ENCODE measurements at regions of chr7 and their contacts with region 1.

Region 1: GRCh38 chr7:128135515-128136214 is 104.4 kb upstream of the LRRC4 start:
- DNase-seq: peak; percentile 49 to 77 (median 70)
- H3K4me3 ChIP-seq: peak overlapping the region; percentile 32 to 79 (median 62)
- H3K27ac ChIP-seq: no peak overlapping the region
- H3K4me1 ChIP-seq: peaks cover 0 to 20% (median 17%) of the 10 kb centered on the region in 4 experiments
- H3K27me3 ChIP-seq: peaks cover 19 to 65% (median 32%) of the 10 kb centered on the region in 5 experiments

Region 2: GRCh38 chr7:127708788-127709187 is 426.9 kb before region 1 on chr7:
- CTCF ChIA-PET with region 1: interaction called, 12 read pairs
- POLR2A ChIA-PET with region 1: no interaction called
- DNase-seq: peak; percentile 81 to 92 (median 86)
- H3K4me3 ChIP-seq: no peak overlapping the region
- H3K27ac ChIP-seq: no peak overlapping the region
- H3K4me1 ChIP-seq: no peaks in the 10 kb centered on the region
- H3K27me3 ChIP-seq: no peaks in the 10 kb centered on the region

Region 3: GRCh38 chr7:128066861-128067260 is 68.8 kb before region 1 on chr7:
- CTCF ChIA-PET with region 1: no interaction called
- POLR2A ChIA-PET with region 1: no interaction called
- DNase-seq: no peak
- H3K4me3 ChIP-seq: no peak overlapping the region
- H3K27ac ChIP-seq: no peak overlapping the region
- H3K4me1 ChIP-seq: peaks cover 0 to 12% (median 0%) of the 10 kb centered on the region in 4 experiments
- H3K27me3 ChIP-seq: no peaks in the 10 kb centered on the region

Region 4: DNA sequence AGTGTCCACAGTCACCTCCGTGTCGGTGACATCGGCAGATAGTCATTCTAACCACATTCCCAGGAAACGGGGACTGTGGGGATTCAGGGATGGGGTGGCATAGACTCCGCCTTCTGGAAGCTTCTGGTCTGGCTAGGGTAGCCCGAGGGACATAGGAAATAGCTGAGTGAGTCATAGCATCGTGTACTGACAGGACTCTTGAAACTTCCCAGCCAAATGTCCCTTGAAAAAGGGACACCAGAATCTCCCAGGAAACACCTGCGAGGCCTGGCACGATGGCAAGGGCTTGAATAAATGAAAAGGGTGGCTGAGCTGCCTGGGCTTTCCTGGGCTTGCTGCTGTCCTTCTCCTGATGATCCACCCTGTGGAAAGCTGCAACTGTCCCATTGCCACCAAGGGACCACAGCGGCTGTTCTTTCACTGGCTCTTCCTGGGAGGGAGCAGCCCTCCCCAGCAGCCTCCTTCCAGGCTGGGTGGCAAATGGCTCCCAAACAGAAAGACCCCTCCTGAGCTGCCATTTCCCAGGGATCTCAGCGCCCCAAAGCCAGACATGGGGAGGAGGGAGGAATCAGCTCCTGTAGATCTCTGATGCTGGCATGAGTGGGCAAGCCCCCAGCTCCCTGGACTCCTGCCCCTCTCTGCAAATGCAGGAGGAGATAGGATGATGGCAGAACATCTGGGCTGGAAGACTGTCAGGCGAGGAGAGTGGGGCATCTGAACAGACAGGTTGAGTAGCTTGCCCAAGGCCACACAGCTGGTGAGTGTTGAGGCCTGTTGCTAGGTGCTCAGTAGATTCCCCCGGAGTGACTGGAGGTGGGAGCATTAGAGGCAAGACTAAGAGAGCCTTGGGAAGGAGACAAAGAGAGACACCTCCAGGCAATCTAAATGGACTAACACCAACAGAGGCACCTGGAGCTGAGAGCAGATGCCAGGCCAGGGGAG is 20.0 kb before region 1 on chr7:
- CTCF ChIA-PET with region 1: interaction called, 13 read pairs
- POLR2A ChIA-PET with region 1: no interaction called
- DNase-seq: no peak
- H3K4me3 ChIP-seq: no peak overlapping the region
- H3K27ac ChIP-seq: no peak overlapping the region
- H3K4me1 ChIP-seq: peaks cover 0 to 22% (median 8%) of the 10 kb centered on the region in 4 experiments
- H3K27me3 ChIP-seq: peaks cover 0 to 12% (median 4%) of the 10 kb centered on the region in 5 experiments

Region 5: GRCh38 chr7:128122576-128123290 is 12.9 kb before region 1 on chr7:
- CTCF ChIA-PET with region 1: interaction called, 14 read pairs
- POLR2A ChIA-PET with region 1: interaction called, 6 read pairs
- DNase-seq: no peak
- H3K4me3 ChIP-seq: peak overlapping the region in 1 of 7 experiments; percentile 2
- H3K27ac ChIP-seq: no peak overlapping the region
- H3K4me1 ChIP-seq: peaks cover 0 to 6% (median 4%) of the 10 kb centered on the region in 4 experiments
- H3K27me3 ChIP-seq: peaks cover 0 to 9% (median 6%) of the 10 kb centered on the region in 5 experiments

Region 6: DNA sequence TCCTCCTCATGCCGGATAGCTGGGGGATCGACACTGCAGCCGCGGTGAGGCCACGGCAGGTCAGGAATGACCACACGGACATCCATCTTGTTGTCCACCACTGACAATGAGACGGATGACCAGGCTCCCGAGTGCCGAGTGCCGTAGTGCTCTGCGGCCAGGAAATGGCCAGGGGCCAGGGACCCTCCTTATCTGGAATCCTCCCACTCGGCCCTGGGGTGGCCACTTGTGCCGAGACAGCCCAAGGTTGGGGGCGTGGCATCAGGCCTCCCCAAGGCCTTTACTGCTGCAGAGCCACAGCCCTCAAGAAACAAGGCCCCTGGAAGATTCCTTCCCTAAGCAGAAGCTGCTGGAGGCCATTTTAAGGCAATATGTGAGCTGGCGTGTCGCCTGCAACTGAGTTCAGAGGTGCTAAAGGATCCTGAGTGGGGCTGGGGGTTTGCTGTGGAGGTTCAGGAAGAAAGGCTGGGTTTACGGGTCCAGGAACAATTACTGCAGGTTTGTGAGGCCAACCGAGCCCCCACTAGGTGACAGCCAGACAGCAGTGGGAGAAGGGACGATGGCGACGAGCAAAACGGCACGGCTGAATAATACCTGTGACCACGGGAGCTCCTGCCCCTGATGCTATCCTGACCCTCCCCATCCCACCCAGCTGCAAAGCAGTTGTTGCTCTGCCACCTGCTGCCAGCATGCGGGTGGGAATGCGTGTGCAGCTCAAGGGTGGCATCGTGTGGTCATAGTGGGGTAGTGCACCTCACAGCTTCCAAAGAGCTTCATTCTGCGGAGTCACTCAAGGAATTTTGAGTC is 73.8 kb after region 1 on chr7:
- CTCF ChIA-PET with region 1: interaction called, 68 read pairs
- POLR2A ChIA-PET with region 1: interaction called, 3 read pairs
- DNase-seq: peak; percentile 71 to 88 (median 81)
- H3K4me3 ChIP-seq: no peak overlapping the region
- H3K27ac ChIP-seq: no peak overlapping the region
- H3K4me1 ChIP-seq: peaks cover 0 to 1% (median 0%) of the 10 kb centered on the region in 4 experiments
- H3K27me3 ChIP-seq: peaks cover 0 to 7% (median 2%) of the 10 kb centered on the region in 5 experiments